Left ventricle myocardium superior (tissue), 1 donor: ENCODE measurements at regions of chr2 and their contacts with region 1.

Region 1: GRCh38 chr2:226095058-226095457 is 695.5 kb downstream of the NYAP2 start:
- DNase-seq: no peak
- ATAC-seq: no peak

Region 2: GRCh38 chr2:226127682-226128081 is 32.6 kb after region 1 on chr2:
- intact Hi-C with region 1: loop called (anchors 2 kb)
- DNase-seq: no peak
- ATAC-seq: no peak